Left cardiac atrium (tissue), 4 donors: ENCODE measurements at regions of chr13 and their contacts with region 1.

Region 1: DNA sequence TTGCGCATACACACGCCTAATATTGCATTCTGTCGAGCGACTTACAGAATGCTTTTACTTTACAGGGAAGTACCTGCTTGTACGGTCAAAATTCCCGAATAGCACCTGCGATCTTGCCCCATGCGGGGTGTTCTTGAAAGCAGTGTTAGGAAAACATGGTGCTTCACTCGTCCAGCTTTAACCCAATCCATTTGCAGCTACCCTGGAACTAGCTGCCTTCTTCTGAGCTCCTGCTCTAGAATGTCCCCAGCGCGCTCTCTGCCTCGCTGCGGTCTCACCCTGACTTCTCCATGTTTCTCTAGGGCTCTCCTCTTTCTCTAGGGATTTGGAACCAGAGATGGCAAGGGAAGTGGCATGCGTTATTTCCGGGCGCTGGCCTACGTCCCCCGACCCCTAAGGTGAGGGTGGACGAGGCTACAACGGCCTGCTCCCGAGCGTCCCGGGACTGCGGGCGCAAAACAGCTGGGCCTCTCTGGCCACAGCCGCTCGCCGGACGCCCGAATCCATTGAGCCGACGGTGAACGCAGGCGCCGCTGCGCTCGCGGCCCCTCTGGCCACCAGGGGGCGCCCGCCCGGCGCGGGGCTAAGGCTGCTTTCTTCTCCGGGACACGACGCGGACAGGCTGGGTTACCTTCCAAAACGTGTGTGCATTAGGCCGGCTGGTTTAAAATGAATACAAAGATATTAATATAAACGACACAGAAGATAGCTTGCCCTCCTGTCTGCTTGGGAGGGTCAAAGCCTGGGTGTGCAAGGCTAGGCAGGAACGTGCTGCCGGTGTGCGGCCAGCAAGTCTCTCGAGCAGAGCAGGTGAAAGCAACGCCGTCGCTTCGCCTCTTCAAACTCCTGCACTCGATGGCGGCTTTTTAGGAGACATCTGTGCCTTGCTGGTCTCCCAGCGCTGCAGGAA is 1.8 kb upstream of the SPRY2 start:
- DNase-seq: peak; percentile 87
- ATAC-seq: peak; percentile 45 to 52

Region 2: DNA sequence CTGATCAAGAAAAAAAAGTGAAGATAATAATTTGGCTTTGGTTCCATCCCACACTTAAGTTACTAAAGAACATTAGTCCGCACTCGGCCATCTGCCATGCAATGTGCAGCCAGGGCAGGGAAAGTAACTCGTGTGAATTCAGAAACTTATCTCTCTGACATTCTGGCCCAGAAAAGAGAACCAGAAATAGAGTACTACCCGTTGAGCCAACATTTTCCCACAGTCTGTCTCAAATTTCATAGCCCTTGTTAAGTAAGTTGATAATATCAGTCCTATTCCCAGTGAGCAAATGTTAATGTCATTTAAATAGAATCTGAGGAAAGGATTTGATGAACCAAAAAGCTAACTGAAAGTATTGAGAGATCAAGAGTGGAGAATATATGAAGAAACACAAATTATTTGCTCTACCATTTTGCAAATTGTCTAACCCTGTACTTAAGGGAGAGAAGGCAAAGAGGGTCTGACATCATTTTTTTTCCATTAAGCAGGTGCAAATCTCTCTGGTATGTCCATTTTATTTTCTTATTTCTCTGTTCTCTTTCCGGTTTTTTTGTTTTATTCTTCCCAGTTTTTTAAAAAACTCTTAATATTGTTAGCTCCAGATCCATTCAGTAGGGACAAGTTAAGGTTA is 705.5 kb before region 1 on chr13:
- intact Hi-C with region 1: loop called in 1 of 2 experiments (anchors 2 kb)
- DNase-seq: peak; percentile 80
- ATAC-seq: peak; percentile 98

Region 3: GRCh38 chr13:79679334-79679733 is 663.4 kb before region 1 on chr13:
- intact Hi-C with region 1: loop called in 1 of 2 experiments (anchors 10 kb)
- DNase-seq: peak; percentile 76
- ATAC-seq: peak; percentile 74 to 86

Region 4: DNA sequence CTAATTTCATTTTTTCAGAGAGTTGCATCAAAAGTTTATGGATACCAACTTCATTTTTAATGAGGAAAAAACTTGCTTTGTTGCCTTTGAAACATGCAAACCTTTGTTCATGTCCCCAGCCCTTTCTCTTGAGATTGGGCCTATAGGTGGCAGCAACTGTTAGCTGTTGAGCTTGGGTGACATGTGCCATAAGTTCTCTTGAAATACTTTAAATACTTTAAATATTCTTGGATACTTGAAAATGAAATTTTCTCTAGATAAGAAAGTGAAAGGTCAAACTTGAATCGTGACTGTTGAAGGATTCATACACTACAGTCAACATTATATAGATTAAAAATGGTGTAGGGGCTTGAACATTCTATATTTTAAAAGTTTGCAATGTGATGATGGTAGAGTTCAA is 566.9 kb before region 1 on chr13:
- intact Hi-C with region 1: loop called (anchors 10 kb)
- DNase-seq: no peak
- ATAC-seq: peak; percentile 46 to 60

Region 5: GRCh38 chr13:79782541-79783205 is 560.1 kb before region 1 on chr13:
- intact Hi-C with region 1: loop called (anchors 10 kb)
- DNase-seq: peak; percentile 76
- ATAC-seq: peak; percentile 95 to 96

Region 6: GRCh38 chr13:79886601-79887000 is 456.1 kb before region 1 on chr13:
- intact Hi-C with region 1: no loop called
- DNase-seq: no peak
- ATAC-seq: no peak

Region 7: GRCh38 chr13:80048802-80049201 is 293.9 kb before region 1 on chr13:
- intact Hi-C with region 1: loop called in 1 of 2 experiments (anchors 10 kb)
- DNase-seq: peak; percentile 84
- ATAC-seq: peak; percentile 98 to 99

Region 8: GRCh38 chr13:80132741-80133601 is 209.8 kb before region 1 on chr13:
- intact Hi-C with region 1: loop called (anchors 5 to 10 kb)
- DNase-seq: peak; percentile 56
- ATAC-seq: peak; percentile 90 to 92

Region 9: DNA sequence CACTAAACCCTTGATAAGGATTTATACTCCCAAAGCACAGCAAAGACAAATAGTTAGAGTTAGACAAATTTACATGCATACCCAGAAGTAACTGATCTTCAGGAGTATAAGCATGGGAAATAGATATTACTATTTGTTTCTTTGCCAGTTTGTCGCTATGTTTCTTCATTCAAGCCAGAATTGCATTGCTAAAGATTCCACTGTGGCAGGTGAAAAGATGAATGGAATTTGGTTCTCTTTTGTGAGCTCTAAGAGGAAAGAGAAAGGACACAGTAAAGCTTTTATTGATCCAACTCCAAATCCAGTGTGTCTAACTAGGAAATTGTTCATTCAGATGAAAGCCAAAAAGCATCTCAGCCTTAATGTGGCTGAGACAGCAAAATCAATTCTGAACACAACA is 290.5 kb after region 1 on chr13:
- intact Hi-C with region 1: no loop called
- DNase-seq: no peak
- ATAC-seq: no peak